ENCODE measurements at regions of chr4 and their contacts with region 1.

Region 1: DNA sequence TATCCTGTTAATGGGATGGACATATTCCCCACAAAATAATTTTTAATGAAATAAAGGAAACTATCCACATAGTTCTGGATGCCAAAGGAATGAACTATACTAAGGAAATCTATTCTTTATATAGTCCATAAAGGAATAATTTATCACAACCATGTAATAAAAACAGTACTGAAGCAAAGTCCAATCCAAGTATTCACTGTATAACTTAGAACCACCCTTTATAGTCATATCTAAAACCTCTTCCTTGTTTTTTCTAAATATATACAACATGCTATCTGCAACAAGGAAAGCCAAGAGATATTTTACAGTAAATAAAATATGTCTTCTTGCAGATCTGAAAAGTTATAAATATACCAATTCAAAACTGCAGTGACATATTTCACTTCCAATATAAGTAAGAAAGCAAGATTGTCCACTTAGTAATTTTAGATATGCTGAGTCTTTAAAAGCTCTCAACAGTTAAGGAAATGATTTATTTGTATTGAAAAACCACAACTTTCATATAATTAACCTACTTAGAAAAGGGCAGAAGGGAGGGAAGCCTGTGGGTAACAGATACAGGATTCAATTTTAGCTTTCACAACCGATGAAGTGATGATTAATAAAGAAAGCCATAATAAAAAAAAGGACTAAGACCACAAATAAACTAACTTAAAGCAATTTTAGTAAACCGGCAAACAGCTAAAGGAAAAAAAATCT is 8.0 kb downstream of the NR3C2 start:
- DNase-seq: no peak
- ATAC-seq: no peak
- H3K4me3 ChIP-seq: peak overlapping the region; percentile 16
- H3K27ac ChIP-seq: no peak overlapping the region
- H3K4me1 ChIP-seq: peaks cover 44% of the 10 kb centered on the region
- H3K27me3 ChIP-seq: no peaks in the 10 kb centered on the region
- CTCF ChIP-seq: no peak

Region 2: DNA sequence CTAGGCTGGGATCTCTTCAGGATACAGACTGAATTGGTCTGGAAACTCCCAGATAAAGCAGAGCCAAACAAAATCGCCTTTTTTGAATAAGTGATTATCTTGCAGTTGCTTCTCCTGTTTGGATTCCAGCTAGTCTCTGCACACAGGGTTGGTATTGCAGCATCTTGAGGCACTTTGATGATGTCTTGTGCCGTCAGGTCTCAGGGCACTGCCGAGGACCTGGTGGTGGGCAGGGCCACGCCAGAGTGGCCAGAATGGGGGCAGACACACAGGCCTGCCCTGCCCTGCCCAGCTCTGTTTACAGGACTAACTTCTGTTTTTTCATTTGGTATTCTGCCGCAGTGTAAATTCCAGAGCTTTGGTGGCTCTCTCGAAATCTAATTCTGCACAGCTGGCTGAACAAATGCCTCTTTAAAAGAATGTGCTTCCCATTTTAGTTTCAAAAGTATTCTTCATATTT is 268.1 kb before region 1 on chr4:
- intact Hi-C with region 1: no loop called
- DNase-seq: no peak
- ATAC-seq: peak in 3 of 4 donors; percentile 53 to 58 (median 57)
- H3K4me3 ChIP-seq: peak overlapping the region; percentile 3
- H3K27ac ChIP-seq: no peak overlapping the region
- H3K4me1 ChIP-seq: peaks cover 20% of the 10 kb centered on the region
- H3K27me3 ChIP-seq: no peaks in the 10 kb centered on the region
- CTCF ChIP-seq: no peak

Region 3: GRCh38 chr4:148380291-148380690 is 53.9 kb before region 1 on chr4:
- intact Hi-C with region 1: loop called in 1 of 2 experiments (anchors 10 kb)
- DNase-seq: no peak
- ATAC-seq: no peak
- H3K4me3 ChIP-seq: no peak overlapping the region
- H3K27ac ChIP-seq: no peak overlapping the region
- H3K4me1 ChIP-seq: peaks cover 14% of the 10 kb centered on the region
- H3K27me3 ChIP-seq: no peaks in the 10 kb centered on the region
- CTCF ChIP-seq: no peak

Measured in psoas muscle (tissue), 8 donors.